RWPE1 (cell line): ENCODE measurements at regions of chr11 and their contacts with region 1.

Region 1: DNA sequence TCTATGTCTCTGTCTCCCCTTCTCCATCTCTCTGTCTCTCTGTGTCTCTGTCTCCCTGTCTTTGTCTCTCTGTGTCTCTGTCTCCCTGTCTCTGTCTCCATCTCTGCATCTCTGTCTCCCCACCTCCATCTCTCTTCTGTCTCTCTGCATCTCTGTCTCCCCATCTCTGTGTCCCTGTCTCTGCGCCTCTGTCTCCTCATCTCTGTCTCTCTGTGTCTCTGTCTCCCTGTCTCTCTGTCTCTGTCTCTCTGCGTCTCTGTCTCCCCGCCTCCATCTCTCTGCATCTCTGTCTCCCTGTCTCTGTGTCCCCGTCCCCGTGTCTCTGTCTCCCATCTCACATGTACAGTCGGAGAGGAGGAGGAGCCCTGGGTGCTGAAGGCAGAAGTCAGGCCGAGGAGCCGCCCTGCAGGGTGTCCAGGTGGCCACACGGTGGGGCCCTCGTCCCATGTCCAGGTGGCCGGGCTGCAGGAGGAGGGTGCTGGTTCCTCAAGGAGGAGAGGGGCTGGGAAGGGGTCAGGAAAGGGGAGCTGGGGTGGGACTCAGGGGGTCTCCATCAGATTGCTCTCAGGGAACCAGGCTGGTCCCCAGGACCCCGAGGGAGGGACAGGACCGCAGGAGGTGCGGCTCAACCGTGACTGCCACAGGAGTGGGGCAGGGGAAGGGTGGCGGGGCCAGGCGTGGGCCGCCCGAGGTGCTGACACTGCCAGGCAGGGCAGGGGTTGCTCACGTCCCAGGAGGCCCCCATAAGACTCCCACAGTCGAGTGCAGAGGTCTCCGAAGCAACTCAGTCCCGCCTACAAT is 25.6 kb upstream of the TH start:
- DNase-seq: peak; percentile 80
- H3K27ac ChIP-seq: no peak overlapping the region
- CTCF ChIP-seq: peak; percentile 93

Region 2: GRCh38 chr11:2166091-2166851 is 30.9 kb before region 1 on chr11:
- CTCF ChIA-PET with region 1: interaction called, 25 read pairs
- POLR2A ChIA-PET with region 1: no interaction called
- DNase-seq: no peak
- H3K27ac ChIP-seq: 0 out of 2 replicates have a peak overlapping the region, but pooled peaks have one; percentile 16
- CTCF ChIP-seq: peak; percentile 81

Region 3: DNA sequence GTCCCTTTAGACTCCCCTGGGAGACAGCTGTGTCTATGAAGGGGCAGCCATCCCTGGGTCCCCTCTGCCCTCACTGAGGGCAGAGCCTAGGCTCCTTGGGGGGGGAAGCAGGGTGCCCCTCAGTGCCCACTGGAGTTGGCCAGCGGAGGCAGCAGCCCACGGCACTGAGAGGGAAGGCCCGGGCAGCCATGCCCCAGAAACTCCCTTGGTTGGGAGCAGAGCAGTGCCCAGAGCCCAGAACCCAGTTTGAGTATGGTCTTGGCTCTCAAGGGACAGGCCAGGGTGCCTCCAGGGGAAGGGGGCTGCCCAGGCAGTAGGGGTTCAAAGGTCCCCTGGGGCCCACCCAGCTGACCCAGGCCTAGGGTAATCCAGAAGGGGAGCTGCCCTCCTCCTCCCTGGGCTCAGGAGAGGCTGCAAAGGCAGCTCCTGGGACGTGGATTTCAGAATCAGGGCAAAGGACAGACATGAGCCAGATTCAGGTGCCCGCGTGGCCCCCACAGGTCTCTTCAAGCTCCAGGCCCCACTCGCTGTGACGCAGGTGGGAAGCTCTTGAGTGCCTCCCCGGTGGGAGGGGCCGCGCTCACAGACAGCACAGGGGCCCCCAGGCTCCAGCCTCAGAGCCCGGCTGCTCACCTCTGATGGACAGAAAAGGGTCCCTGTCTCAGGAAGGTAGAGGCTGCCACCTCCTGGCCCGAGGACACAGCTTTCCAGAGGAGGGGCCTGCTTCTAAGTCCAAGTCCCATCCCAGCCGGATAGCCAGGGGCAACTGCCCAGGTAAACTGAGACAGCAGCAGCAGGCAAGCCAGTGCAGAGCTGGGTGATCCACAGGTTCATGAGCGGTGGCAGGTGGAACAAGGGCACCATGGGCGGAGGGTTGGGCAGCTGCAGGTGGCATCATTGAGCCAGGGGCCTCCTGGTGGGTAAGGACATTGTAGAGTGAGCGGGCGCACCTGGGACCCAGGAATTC is 101.9 kb after region 1 on chr11:
- CTCF ChIA-PET with region 1: interaction called, 50 read pairs
- POLR2A ChIA-PET with region 1: no interaction called
- DNase-seq: peak; percentile 57
- H3K27ac ChIP-seq: no peak overlapping the region
- CTCF ChIP-seq: peak; percentile 31